ENCODE measurements at regions of chr17 and their contacts with region 1.

Region 1: GRCh38 chr17:62968445-62968923 is 2.4 kb downstream of the TANC2 start:
- DNase-seq: no peak
- H3K4me3 ChIP-seq: no peak overlapping the region
- H3K27ac ChIP-seq: no peak overlapping the region
- H3K4me1 ChIP-seq: peaks cover 29% of the 10 kb centered on the region
- H3K27me3 ChIP-seq: no peaks in the 10 kb centered on the region
- CTCF ChIP-seq: peak; percentile 78 to 82 (median 79)
- POLR2A ChIP-seq: no peak

Region 2: GRCh38 chr17:62703775-62704378 is 264.6 kb before region 1 on chr17:
- intact Hi-C with region 1: loop called (anchors 5 kb)
- DNase-seq: no peak
- H3K4me3 ChIP-seq: peak overlapping the region; percentile 56 to 74
- H3K27ac ChIP-seq: peak overlapping the region; percentile 81
- H3K4me1 ChIP-seq: peaks cover 26% of the 10 kb centered on the region
- H3K27me3 ChIP-seq: no peaks in the 10 kb centered on the region
- CTCF ChIP-seq: peak in 2 of 3 experiments; percentile 57 to 83
- POLR2A ChIP-seq: no peak

Region 3: DNA sequence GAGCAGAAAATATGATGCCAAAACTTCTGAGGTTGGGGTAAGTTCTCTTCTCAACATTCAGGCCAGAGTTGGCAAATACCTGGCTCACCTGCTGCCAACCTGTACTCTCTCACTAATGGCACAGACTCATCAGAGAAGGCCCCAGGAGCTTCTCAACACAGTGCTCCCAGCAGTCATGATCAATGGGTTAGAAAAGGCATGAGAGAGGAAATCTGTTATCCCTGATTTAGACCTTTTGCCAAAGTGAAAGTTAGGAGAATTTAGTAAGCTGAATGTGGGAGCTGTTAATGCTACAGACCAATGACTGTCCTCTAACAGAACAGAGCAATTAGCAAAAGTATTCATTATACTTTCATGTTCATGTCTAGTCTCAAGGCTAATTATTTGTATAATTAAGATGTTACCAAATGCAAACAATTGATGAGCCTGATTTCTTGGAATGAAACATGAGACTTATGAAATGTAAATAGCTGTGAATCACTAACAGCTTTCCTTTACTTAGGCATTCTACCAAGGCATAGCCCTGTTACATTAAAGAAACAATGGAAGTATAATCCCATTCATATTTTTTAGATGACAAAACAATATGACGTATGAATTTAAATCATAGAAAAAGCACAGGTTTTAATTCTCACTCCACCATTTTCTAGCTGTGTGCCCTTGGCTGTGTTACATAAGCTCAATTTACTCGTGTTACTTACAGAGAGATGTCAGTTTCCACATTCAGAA is 91.6 kb before region 1 on chr17:
- intact Hi-C with region 1: no loop called
- DNase-seq: no peak
- H3K4me3 ChIP-seq: no peak overlapping the region
- H3K27ac ChIP-seq: no peak overlapping the region
- H3K4me1 ChIP-seq: peaks cover 5% of the 10 kb centered on the region
- H3K27me3 ChIP-seq: no peaks in the 10 kb centered on the region
- CTCF ChIP-seq: no peak
- POLR2A ChIP-seq: no peak